ENCODE measurements at regions of chr19 and their contacts with region 1.

Region 1: DNA sequence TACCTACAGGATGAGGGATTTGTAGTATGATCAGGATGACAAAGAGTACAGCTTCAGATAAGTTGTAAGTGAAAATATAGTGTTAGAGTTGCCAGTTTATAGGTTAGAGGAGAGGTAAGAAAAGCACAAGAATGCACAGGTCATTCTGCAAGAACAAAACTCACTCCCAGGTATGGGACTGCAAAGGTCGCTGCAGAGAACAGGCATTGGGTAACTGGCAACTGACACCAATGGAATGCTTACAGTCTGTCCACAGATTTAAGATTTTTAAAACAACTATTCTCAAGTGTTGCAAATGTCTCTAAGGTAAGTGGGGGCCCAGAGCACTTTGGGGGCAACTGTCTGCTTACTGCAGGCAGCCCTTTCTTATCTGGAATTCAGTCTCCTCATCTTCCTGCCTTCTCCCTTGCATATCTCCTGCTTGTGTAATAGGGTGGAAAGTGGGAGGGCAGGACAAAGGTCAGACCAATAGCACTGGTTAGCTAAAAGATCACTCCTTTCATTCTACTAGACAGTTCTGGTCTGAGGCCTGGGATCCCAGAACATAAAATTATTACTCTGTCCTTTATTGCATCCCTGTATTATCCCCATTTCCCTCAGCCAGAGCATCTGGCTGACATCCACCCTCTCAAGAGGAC is 42.3 kb upstream of the ZNF726 start:
- DNase-seq: no peak
- H3K4me3 ChIP-seq: no peak overlapping the region
- H3K27ac ChIP-seq: no peak overlapping the region
- H3K4me1 ChIP-seq: no peaks in the 10 kb centered on the region
- H3K27me3 ChIP-seq: peaks cover 6% of the 10 kb centered on the region
- CTCF ChIP-seq: no peak

Region 2: GRCh38 chr19:23823952-23824389 is 48.4 kb before region 1 on chr19:
- intact Hi-C with region 1: no loop called
- DNase-seq: no peak
- H3K4me3 ChIP-seq: no peak overlapping the region
- H3K27ac ChIP-seq: no peak overlapping the region
- H3K4me1 ChIP-seq: no peaks in the 10 kb centered on the region
- H3K27me3 ChIP-seq: no peaks in the 10 kb centered on the region
- CTCF ChIP-seq: peak; percentile 13

Region 3: GRCh38 chr19:23969630-23970029 is 97.2 kb after region 1 on chr19:
- intact Hi-C with region 1: loop called (anchors 2 kb)
- DNase-seq: no peak
- H3K4me3 ChIP-seq: no peak overlapping the region
- H3K27ac ChIP-seq: no peak overlapping the region
- H3K4me1 ChIP-seq: peaks cover 9% of the 10 kb centered on the region
- H3K27me3 ChIP-seq: peaks cover 54% of the 10 kb centered on the region
- CTCF ChIP-seq: no peak

Measured in left ventricle myocardium inferior (tissue), 1 donor.